Activated CD8-positive, alpha-beta T cell treated with anti-CD3 and anti-CD28 coated beads for 36 hours (primary cell): ENCODE measurements at regions of chr20 and their contacts with region 1.

Region 1: DNA sequence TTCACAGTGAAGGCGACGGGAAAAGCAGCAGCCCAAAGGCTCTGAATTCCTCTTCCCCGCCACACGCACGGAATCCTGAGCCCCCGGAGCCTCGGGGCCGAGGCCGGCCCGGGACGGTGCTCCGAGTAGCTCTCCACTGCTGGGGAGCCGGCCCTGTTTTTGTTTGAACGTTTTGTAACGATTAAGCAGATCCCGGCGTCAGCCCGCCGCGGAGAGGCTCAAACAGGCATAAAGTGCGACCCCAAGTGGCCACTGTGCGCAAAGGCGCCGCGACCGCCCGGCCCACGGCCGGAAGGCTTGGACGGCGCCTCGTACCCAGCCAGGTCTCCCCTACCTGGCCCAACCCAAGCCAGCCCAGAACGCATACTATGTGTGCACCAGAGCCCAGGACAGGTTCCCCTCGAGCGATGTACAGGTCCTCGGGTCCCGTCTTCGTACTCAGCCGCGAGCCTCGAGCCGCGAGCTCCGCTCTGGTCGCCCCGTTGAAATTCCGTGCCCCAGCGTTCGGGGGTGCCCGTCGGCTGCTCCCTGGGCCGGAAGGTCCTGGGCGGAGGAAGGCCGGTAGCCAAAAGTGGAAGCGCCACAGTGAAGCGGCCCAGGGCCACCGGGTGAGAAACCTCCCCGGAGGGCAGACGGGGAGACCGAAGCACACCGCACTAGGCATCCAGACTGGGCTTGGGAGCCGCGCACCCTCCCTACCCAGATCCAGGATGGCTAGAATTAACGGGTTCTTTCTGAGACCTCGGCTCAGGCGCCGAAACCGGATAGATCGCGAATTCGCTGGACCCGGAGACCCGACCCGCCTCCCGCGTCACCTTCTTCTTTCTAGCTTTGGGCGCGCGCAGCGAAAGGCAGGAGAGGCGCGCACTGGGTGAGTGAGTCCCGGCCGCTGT is 1.2 kb upstream of the MAFB start:
- DNase-seq: peak; percentile 87
- ATAC-seq: peak; percentile 68
- H3K4me3 Mint-ChIP-seq: peak overlapping the region; percentile 62
- H3K27ac Mint-ChIP-seq: no peak overlapping the region
- H3K4me1 Mint-ChIP-seq: peaks cover 13% of the 10 kb centered on the region
- H3K27me3 Mint-ChIP-seq: peaks cover 82% of the 10 kb centered on the region
- CTCF ChIP-seq: peak; percentile 79

Region 2: GRCh38 chr20:40160097-40160550 is 530.1 kb before region 1 on chr20:
- CTCF ChIA-PET with region 1: no interaction called
- POLR2A ChIA-PET with region 1: no interaction called
- intact Hi-C with region 1: loop called (anchors 10 kb)
- DNase-seq: peak; percentile 40
- ATAC-seq: peak; percentile 53
- H3K4me3 Mint-ChIP-seq: no peak overlapping the region
- H3K27ac Mint-ChIP-seq: no peak overlapping the region
- H3K4me1 Mint-ChIP-seq: no peaks in the 10 kb centered on the region
- H3K27me3 Mint-ChIP-seq: no peaks in the 10 kb centered on the region
- CTCF ChIP-seq: peak; percentile 55

Region 3: GRCh38 chr20:40676491-40677269 is 13.5 kb before region 1 on chr20:
- CTCF ChIA-PET with region 1: interaction called, 13 read pairs
- POLR2A ChIA-PET with region 1: interaction called, 3 read pairs
- intact Hi-C with region 1: no loop called
- DNase-seq: no peak
- ATAC-seq: no peak
- H3K4me3 Mint-ChIP-seq: no peak overlapping the region
- H3K27ac Mint-ChIP-seq: no peak overlapping the region
- H3K4me1 Mint-ChIP-seq: no peaks in the 10 kb centered on the region
- H3K27me3 Mint-ChIP-seq: peaks cover 27% of the 10 kb centered on the region
- CTCF ChIP-seq: no peak